ENCODE measurements at regions of chr9 and their contacts with region 1.

Region 1: DNA sequence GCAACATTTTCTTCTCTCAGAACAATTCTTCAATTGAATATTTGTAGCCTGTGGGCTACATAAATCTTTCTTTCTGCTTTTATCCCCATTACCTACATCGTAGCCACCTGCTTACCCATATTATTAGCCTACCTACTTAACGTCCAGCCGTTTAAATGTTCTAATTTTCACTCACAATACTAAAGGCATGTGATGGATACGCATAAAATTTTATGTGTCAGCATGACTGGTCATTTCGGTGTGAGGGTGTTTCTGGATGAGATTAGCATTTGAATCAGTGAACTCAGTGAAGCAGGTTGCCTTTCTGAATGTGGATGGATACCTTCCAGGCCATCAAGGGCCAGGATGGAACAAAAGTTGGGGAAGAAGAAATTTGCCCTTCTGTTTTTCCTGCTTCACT is 1722.5 kb upstream of the ACO1 start:
- DNase-seq: no peak
- H3K4me3 ChIP-seq: no peak overlapping the region
- H3K27ac ChIP-seq: no peak overlapping the region
- H3K4me1 ChIP-seq: no peaks in the 10 kb centered on the region
- H3K27me3 ChIP-seq: no peaks in the 10 kb centered on the region
- CTCF ChIP-seq: no peak
- POLR2A ChIP-seq: no peak

Region 2: GRCh38 chr9:30140407-30140806 is 521.5 kb before region 1 on chr9:
- CTCF ChIA-PET with region 1: no interaction called
- POLR2A ChIA-PET with region 1: no interaction called
- dilution Hi-C with region 1: no loop called
- intact Hi-C with region 1: loop called (anchors 5 kb)
- DNase-seq: no peak
- H3K4me3 ChIP-seq: no peak overlapping the region
- H3K27ac ChIP-seq: no peak overlapping the region
- H3K4me1 ChIP-seq: no peaks in the 10 kb centered on the region
- H3K27me3 ChIP-seq: no peaks in the 10 kb centered on the region
- CTCF ChIP-seq: no peak
- POLR2A ChIP-seq: no peak

Region 3: GRCh38 chr9:30605936-30606335 is 56.0 kb before region 1 on chr9:
- CTCF ChIA-PET with region 1: no interaction called
- POLR2A ChIA-PET with region 1: no interaction called
- dilution Hi-C with region 1: no loop called
- intact Hi-C with region 1: no loop called
- DNase-seq: no peak
- H3K4me3 ChIP-seq: no peak overlapping the region
- H3K27ac ChIP-seq: no peak overlapping the region
- H3K4me1 ChIP-seq: no peaks in the 10 kb centered on the region
- H3K27me3 ChIP-seq: no peaks in the 10 kb centered on the region
- CTCF ChIP-seq: no peak
- POLR2A ChIP-seq: no peak

Measured in endothelial cell of umbilical vein (primary cell).